ENCODE measurements at regions of chrX and their contacts with region 1.

Region 1: GRCh38 chrX:130158311-130158710 is 7.3 kb downstream of the AIFM1 start:
- DNase-seq: no peak
- ATAC-seq: no peak
- H3K4me3 ChIP-seq: no peak overlapping the region
- H3K4me3 Mint-ChIP-seq: no peak overlapping the region
- H3K27ac ChIP-seq: no peak overlapping the region
- H3K27ac Mint-ChIP-seq: no peak overlapping the region
- H3K4me1 ChIP-seq: peaks cover 2% of the 10 kb centered on the region
- H3K4me1 Mint-ChIP-seq: peaks cover 12% of the 10 kb centered on the region
- H3K27me3 ChIP-seq: no peaks in the 10 kb centered on the region
- H3K27me3 Mint-ChIP-seq: no peaks in the 10 kb centered on the region
- CTCF ChIP-seq: no peak

Region 2: DNA sequence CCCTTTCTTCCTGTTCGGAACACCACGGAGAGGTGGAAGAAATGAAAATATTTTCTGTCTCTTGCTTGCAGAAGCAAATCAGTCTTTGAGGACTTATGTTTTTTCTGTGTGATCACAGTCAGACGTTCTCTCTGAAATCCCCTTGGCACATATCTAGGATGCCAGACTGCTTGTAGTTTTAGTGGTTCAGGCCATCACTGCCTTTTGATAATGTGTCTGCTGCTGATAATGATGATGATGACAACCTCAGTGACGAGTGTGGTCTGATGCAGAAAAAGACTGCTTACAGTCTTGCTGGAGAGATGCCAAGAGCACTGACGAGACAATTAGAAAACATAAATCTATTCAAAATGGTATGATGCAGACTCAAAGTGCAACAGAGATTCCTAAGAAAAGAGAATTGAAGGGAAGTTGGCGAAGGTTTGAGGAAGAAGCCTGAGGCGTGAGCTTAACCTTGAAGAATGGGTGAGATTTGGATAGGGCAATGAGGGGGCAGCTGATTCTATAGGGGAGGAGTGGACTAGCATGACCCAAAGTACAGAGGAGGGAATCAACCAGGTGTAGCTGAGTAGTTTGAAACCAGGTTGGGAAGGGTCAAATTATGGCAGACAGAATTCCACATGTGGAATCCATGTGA is 21.4 kb after region 1 on chrX:
- CTCF ChIA-PET with region 1: no interaction called
- POLR2A ChIA-PET with region 1: no interaction called
- intact Hi-C with region 1: loop called in 1 of 2 experiments (anchors 1 kb)
- DNase-seq: peak in 4 of 14 experiments; percentile 27 to 63 (median 52)
- ATAC-seq: peak; percentile 81
- H3K4me3 ChIP-seq: no peak overlapping the region
- H3K4me3 Mint-ChIP-seq: peak overlapping the region; percentile 64
- H3K27ac ChIP-seq: no peak overlapping the region
- H3K27ac Mint-ChIP-seq: peak overlapping the region; percentile 90
- H3K4me1 ChIP-seq: peaks cover 55% of the 10 kb centered on the region
- H3K4me1 Mint-ChIP-seq: peaks cover 52% of the 10 kb centered on the region
- H3K27me3 ChIP-seq: no peaks in the 10 kb centered on the region
- H3K27me3 Mint-ChIP-seq: no peaks in the 10 kb centered on the region
- CTCF ChIP-seq: no peak

Measured in CD4-positive, alpha-beta T cell (primary cell).